Right ventricle myocardium inferior (tissue), 1 donor: ENCODE measurements at regions of chr21 and their contacts with region 1.

Region 1: DNA sequence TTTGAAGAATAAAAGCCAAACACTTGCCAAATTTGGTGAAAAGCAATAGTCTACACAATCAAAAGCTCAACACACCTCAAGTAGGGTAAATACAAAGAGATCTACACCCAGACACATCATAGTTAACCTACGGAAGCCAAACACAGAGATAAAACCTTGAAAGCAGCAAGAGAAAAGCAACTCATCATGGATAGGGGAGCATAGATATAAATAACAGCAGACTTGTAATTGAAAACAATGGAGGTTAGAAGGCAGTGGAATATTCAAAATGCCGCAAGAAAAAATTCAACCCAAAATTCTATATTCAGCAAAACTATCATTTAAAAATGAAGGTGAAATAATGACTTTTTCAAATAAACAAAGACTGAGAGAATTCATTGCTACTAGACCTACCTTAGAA is 105.1 kb downstream of the ITSN1 start:
- DNase-seq: no peak
- ATAC-seq: no peak

Region 2: DNA sequence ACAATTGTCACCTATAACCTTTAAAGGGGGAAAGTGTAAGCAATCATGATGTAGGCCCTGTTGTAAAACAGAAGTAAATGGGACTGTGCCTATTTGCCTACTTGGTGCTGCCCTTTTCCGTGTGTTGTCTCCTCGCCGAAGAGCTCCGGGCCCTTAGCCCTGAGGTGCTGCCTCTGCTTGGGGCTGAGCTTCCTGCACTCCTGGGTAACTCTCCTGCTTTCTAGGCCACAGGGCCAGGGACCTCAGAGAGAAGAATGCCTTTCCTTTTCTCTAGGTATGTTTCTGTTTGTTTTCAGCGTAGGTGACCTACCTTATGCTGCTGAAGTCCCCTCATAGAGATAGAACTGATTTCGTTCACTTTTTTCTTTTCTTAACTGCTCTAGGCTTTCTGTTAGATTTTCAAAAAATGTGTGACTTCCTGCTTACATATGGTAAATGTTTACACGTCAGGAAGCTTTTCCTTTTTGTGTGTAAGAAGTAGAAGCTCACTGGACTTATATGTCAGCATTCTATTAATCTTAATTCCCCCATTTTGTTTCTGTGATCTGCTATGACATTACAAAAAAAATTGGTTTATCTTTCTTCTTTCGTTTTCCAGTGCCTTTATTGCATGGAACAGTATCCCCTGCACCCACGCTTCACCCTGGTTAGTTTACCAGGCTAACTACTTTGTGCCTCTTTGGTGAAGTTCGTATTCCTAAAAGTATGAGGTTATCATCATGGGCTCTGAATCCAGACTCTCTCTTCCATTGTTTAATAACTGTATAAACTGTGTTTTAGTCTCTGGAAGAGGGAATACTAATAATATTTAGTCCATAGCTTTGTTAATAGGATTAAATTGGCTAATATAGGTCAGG is 43.4 kb before region 1 on chr21:
- intact Hi-C with region 1: loop called (anchors 5 kb)
- DNase-seq: no peak
- ATAC-seq: no peak